Activated CD8-positive, alpha-beta T cell treated with anti-CD3 and anti-CD28 coated beads, Interleukin-2, amount 10 ng/mL, durations not matched to agents 7 days and 5 days (primary cell): ENCODE measurements at regions of chr1 and their contacts with region 1.

Region 1: GRCh38 chr1:150281837-150282653 is at the start of gene CIART:
- DNase-seq: peak; percentile 83
- ATAC-seq: peak; percentile 92
- H3K4me3 Mint-ChIP-seq: peak within 1 kb of the TSS; percentile 71
- H3K27ac Mint-ChIP-seq: peak within 1 kb of the TSS; percentile 80
- H3K4me1 Mint-ChIP-seq: peaks cover 24% of the 10 kb centered on the region
- H3K27me3 Mint-ChIP-seq: peaks cover 11% of the 10 kb centered on the region
- total RNA-seq, gene CIART: 2.0 to 2.3 TPM

Region 2: GRCh38 chr1:150268705-150269403 is 13.2 kb before region 1 on chr1 and contains the start of gene APH1A:
- CTCF ChIA-PET with region 1: interaction called, 14 read pairs
- POLR2A ChIA-PET with region 1: interaction called, 7 read pairs
- DNase-seq: peak; percentile 97
- ATAC-seq: peak; percentile 96
- H3K4me3 Mint-ChIP-seq: peak within 1 kb of the TSS; percentile 99
- H3K27ac Mint-ChIP-seq: peak within 1 kb of the TSS; percentile 98
- H3K4me1 Mint-ChIP-seq: peaks cover 40% of the 10 kb centered on the region
- H3K27me3 Mint-ChIP-seq: no peaks in the 10 kb centered on the region
- total RNA-seq, gene APH1A: 128 to 132 TPM